Panc1 (cell line): ENCODE measurements at regions of chr2 and their contacts with region 1.

Region 1: GRCh38 chr2:64488050-64488974 is 34.4 kb downstream of the LGALSL start:
- DNase-seq: peak; percentile 52
- ATAC-seq: peak; percentile 81
- H3K4me3 ChIP-seq: no peak overlapping the region
- H3K27ac ChIP-seq: no peak overlapping the region
- H3K4me1 ChIP-seq: no peaks in the 10 kb centered on the region
- H3K27me3 ChIP-seq: peaks cover 32% of the 10 kb centered on the region
- CTCF ChIP-seq: peak; percentile 96

Region 2: DNA sequence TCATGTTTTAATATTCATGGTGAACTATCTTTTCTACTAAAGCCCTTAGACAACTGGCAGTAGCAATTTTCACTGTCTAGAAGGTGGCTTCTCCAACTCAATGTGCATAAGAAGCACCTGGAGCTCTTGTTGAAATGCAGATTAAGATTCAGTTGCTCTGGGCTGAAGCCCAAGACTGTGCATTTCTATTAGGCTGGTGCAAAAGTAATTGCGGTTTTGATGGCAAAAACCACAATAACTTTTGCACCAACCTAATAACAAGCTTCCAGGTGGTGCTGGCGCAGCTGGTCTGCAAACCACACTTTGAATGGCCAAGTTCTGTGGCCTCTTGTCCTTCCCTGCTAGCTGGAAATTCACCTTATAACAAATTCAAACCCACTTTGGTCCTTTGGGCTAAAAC is 442.4 kb before region 1 on chr2:
- CTCF ChIA-PET with region 1: no interaction called
- POLR2A ChIA-PET with region 1: no interaction called
- in situ Hi-C with region 1: no loop called
- intact Hi-C with region 1: loop called (anchors 5 kb)
- DNase-seq: no peak
- ATAC-seq: no peak
- H3K4me3 ChIP-seq: no peak overlapping the region
- H3K27ac ChIP-seq: no peak overlapping the region
- H3K4me1 ChIP-seq: no peaks in the 10 kb centered on the region
- H3K27me3 ChIP-seq: no peaks in the 10 kb centered on the region
- CTCF ChIP-seq: no peak